ENCODE measurements at regions of chr14 and their contacts with region 1.

Region 1: GRCh38 chr14:52272375-52272774 is 4.9 kb downstream of the PTGDR start:
- DNase-seq: no peak
- ATAC-seq: peak; percentile 55
- H3K4me3 ChIP-seq: no peak overlapping the region
- H3K27ac ChIP-seq: no peak overlapping the region
- H3K4me1 ChIP-seq: no peaks in the 10 kb centered on the region
- H3K27me3 ChIP-seq: peaks cover 10 to 22% of the 10 kb centered on the region in 2 experiments
- CTCF ChIP-seq: peak; percentile 31 to 37 (median 35); a peak in 4 of 6 replicates
- EP300 ChIP-seq: no peak
- POLR2A ChIP-seq: no peak
- RAD21 ChIP-seq: peak; percentile 35; the same call in 1 of the 2 replicates

Region 2: GRCh38 chr14:52043690-52044089 is 228.7 kb before region 1 on chr14:
- CTCF ChIA-PET with region 1: no interaction called
- POLR2A ChIA-PET with region 1: no interaction called
- RAD21 ChIA-PET with region 1: no interaction called
- SMC1A ChIA-PET with region 1: no interaction called
- in situ Hi-C with region 1: loop called (anchors 10 kb)
- intact Hi-C with region 1: no loop called
- DNase-seq: no peak
- ATAC-seq: peak; percentile 84
- H3K4me3 ChIP-seq: no peak overlapping the region
- H3K27ac ChIP-seq: no peak overlapping the region
- H3K4me1 ChIP-seq: no peaks in the 10 kb centered on the region
- H3K27me3 ChIP-seq: peaks cover 0 to 4% of the 10 kb centered on the region in 2 experiments; a peak in 2 of 4 replicates
- CTCF ChIP-seq: peak; percentile 39 to 50 (median 48); a peak in 4 of 6 replicates
- EP300 ChIP-seq: no peak
- POLR2A ChIP-seq: no peak
- RAD21 ChIP-seq: 0 out of 2 replicates have a peak, but pooled peaks have one; percentile 19

Region 3: GRCh38 chr14:52369305-52369801 is 97.0 kb after region 1 on chr14:
- CTCF ChIA-PET with region 1: no interaction called
- POLR2A ChIA-PET with region 1: no interaction called
- RAD21 ChIA-PET with region 1: no interaction called
- SMC1A ChIA-PET with region 1: no interaction called
- in situ Hi-C with region 1: no loop called
- intact Hi-C with region 1: no loop called
- DNase-seq: no peak
- ATAC-seq: no peak
- H3K4me3 ChIP-seq: no peak overlapping the region
- H3K27ac ChIP-seq: no peak overlapping the region
- H3K4me1 ChIP-seq: no peaks in the 10 kb centered on the region
- H3K27me3 ChIP-seq: peaks cover 0 to 2% of the 10 kb centered on the region in 2 experiments; a peak in 1 of 4 replicates
- CTCF ChIP-seq: no peak
- EP300 ChIP-seq: no peak
- POLR2A ChIP-seq: no peak
- RAD21 ChIP-seq: no peak

Region 4: GRCh38 chr14:52430474-52430873 is 158.1 kb after region 1 on chr14:
- CTCF ChIA-PET with region 1: no interaction called
- POLR2A ChIA-PET with region 1: no interaction called
- RAD21 ChIA-PET with region 1: no interaction called
- SMC1A ChIA-PET with region 1: no interaction called
- in situ Hi-C with region 1: no loop called
- intact Hi-C with region 1: no loop called
- DNase-seq: no peak
- ATAC-seq: no peak
- H3K4me3 ChIP-seq: no peak overlapping the region
- H3K27ac ChIP-seq: no peak overlapping the region
- H3K4me1 ChIP-seq: no peaks in the 10 kb centered on the region
- H3K27me3 ChIP-seq: no peaks in the 10 kb centered on the region
- CTCF ChIP-seq: no peak
- EP300 ChIP-seq: no peak
- POLR2A ChIP-seq: no peak
- RAD21 ChIP-seq: no peak

Region 5: DNA sequence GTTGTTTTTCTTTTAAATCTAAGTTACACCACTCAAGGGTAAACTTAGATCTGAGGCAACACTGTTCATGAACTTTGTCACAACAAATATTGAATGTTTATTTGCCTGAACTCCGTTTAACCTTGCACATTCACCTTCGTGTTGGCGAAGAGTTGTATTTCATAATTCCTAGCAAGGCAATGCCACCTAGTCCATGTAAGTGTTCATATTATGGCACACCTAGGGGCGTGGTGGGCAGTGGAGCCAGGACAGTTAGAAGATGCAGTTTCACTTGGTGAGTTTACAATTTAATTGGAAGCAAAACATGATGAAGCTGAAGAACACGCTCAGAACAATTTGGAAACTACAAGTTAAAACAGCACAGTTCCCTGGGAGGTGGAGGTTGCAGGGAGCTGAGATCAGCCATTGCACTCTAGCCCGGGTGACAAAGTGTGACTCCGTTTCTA is 549.5 kb after region 1 on chr14:
- CTCF ChIA-PET with region 1: no interaction called
- POLR2A ChIA-PET with region 1: no interaction called
- RAD21 ChIA-PET with region 1: no interaction called
- SMC1A ChIA-PET with region 1: no interaction called
- in situ Hi-C with region 1: no loop called
- intact Hi-C with region 1: no loop called
- DNase-seq: no peak
- ATAC-seq: no peak
- H3K4me3 ChIP-seq: no peak overlapping the region
- H3K27ac ChIP-seq: no peak overlapping the region
- H3K4me1 ChIP-seq: peaks cover 5% of the 10 kb centered on the region
- H3K27me3 ChIP-seq: no peaks in the 10 kb centered on the region
- CTCF ChIP-seq: no peak
- EP300 ChIP-seq: no peak
- POLR2A ChIP-seq: no peak
- RAD21 ChIP-seq: no peak